Activated naive CD4-positive, alpha-beta T cell treated with anti-CD3 and anti-CD28 coated beads for 36 hours (primary cell): ENCODE measurements at regions of chr1 and their contacts with region 1.

Region 1: DNA sequence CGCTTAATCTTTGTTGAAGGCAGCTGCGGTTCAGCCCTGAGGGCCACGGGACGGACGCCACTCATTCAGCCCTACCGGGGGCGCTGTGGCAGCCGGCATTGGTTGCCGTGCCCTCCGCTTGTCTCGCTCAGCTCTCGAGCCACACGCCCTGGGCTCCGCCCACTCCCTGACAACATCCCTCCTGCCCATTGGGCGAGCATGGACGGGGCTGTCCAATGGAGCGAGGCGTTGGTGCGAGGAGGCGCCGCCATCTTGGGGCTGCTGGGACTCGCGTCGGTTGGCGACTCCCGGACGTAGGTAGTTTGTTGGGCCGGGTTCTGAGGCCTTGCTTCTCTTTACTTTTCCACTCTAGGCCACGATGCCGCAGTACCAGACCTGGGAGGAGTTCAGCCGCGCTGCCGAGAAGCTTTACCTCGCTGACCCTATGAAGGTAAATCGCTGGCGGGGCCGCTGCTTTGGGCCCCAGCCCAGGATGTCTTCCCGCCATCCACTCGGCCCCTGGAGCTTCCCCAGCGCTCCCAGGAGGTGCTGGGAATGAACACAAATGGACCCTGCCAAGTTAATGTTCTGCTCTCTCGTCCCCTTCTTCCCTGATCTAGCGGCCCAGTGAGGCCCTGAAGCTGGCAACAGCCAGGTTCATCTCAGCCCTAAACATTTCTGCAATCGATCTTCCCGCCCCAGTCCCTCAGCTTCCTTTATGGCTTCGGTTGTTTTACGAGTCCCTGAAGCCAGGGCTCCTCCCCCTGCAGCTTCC is at the start of gene SRP9:
- DNase-seq: peak; percentile 99
- H3K4me3 Mint-ChIP-seq: no peak within 1 kb of the TSS
- H3K27ac Mint-ChIP-seq: no peak within 1 kb of the TSS
- H3K4me1 Mint-ChIP-seq: peaks cover 32% of the 10 kb centered on the region
- H3K27me3 Mint-ChIP-seq: no peaks in the 10 kb centered on the region
- total RNA-seq, gene SRP9: 356 to 363 TPM

Region 2: DNA sequence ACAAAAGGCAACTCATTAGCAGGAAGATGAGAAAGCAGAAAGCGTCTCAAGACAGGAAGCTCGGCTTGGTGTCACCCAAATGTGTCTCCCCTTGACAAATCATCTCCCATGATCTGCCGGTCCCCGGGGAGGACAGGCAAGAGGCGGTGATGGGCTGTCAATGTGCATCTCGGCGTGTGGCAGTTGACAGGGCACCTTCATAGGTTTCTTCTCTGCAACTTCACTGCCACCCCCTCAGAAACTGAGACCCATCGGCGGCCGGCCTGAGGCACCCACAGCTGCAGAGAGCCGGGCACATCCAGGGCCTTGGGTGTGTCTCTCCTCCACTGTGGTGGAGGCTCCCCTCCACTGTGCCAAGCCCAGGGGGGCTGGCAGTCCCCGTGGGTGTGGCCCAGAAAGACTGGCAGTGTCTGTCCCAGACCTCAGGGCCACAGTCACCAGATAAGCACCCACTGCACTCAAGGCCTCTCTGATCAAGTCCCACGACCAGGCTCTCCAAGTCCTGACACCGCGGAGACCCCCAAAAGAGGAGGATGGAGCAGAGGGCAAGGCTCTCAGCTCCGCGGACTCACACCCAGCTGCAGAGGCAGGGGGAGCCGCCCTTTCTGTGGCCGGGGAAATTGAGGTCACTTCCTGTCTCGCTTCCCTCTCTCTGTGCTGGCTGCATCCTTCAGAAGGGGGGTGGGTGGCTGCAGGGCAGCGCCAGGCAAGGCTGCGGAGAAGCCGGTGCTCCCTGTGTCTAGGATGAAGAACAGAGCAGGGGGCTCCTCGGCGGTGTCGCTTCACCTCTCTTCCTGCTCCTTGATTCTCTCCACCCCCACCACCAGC is 310.4 kb before region 1 on chr1:
- CTCF ChIA-PET with region 1: interaction called, 3 read pairs
- intact Hi-C with region 1: loop called (anchors 2 kb)
- DNase-seq: peak; percentile 91
- H3K4me3 Mint-ChIP-seq: peak overlapping the region; percentile 90
- H3K27ac Mint-ChIP-seq: peak overlapping the region; percentile 99
- H3K4me1 Mint-ChIP-seq: peaks cover 17% of the 10 kb centered on the region
- H3K27me3 Mint-ChIP-seq: no peaks in the 10 kb centered on the region

Region 3: GRCh38 chr1:225794954-225795353 is 17.2 kb after region 1 on chr1:
- CTCF ChIA-PET with region 1: no interaction called
- intact Hi-C with region 1: no loop called
- DNase-seq: no peak
- H3K4me3 Mint-ChIP-seq: no peak overlapping the region
- H3K27ac Mint-ChIP-seq: no peak overlapping the region
- H3K4me1 Mint-ChIP-seq: no peaks in the 10 kb centered on the region
- H3K27me3 Mint-ChIP-seq: no peaks in the 10 kb centered on the region

Region 4: GRCh38 chr1:225809842-225810578 is 32.2 kb after region 1 on chr1 and contains the start of gene EPHX1:
- CTCF ChIA-PET with region 1: interaction called, 3 read pairs
- intact Hi-C with region 1: loop called (anchors 1 kb)
- DNase-seq: peak; percentile 79
- H3K4me3 Mint-ChIP-seq: peak within 1 kb of the TSS; percentile 71
- H3K27ac Mint-ChIP-seq: peak within 1 kb of the TSS; percentile 59
- H3K4me1 Mint-ChIP-seq: peaks cover 14% of the 10 kb centered on the region
- H3K27me3 Mint-ChIP-seq: no peaks in the 10 kb centered on the region
- total RNA-seq, gene EPHX1: 3.8 to 5.0 TPM

Region 5: DNA sequence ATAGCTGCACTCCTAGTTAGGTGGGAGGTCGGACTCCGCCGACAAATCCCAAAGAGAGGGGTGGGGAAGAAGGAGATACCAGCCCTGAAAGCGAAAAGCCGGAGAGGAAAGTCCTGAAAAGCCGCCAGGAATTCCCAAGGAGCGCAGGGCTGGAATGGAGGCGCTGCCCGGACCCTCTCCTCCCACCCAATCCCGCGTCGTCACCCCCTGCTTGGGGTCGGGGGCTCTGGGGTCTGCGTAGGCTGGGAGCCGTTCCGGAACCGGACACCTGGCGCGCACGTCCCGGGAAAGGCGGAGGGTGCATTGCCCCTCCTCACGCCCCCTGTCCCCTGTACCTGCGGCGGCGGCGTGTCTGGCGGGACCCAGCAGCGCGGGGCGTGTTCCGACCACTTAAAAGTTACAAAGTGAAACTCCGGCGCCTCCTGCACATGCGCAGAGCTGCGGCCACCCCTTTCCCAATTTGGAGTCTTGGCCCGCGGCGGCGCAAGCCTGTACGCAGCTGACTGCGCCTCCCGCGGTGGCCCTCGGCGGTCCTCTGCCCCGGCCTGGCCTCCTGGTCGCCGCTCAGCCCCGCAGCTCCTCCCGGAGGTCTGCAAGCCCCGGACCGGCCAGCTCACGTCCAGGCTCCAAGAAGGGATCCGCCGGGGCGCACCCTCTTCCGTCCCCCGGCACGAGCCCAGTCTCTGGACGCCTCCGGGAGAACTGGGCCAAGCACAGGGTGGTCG is 104.4 kb after region 1 on chr1 and contains the start of gene TMEM63A:
- CTCF ChIA-PET with region 1: interaction called, 9 read pairs
- intact Hi-C with region 1: loop called (anchors 1 kb)
- DNase-seq: peak; percentile 88
- H3K4me3 Mint-ChIP-seq: peak within 1 kb of the TSS; percentile 92
- H3K27ac Mint-ChIP-seq: peak within 1 kb of the TSS; percentile 91
- H3K4me1 Mint-ChIP-seq: peaks cover 49% of the 10 kb centered on the region
- H3K27me3 Mint-ChIP-seq: no peaks in the 10 kb centered on the region
- total RNA-seq, gene TMEM63A: 34.3 to 34.7 TPM

Region 6: DNA sequence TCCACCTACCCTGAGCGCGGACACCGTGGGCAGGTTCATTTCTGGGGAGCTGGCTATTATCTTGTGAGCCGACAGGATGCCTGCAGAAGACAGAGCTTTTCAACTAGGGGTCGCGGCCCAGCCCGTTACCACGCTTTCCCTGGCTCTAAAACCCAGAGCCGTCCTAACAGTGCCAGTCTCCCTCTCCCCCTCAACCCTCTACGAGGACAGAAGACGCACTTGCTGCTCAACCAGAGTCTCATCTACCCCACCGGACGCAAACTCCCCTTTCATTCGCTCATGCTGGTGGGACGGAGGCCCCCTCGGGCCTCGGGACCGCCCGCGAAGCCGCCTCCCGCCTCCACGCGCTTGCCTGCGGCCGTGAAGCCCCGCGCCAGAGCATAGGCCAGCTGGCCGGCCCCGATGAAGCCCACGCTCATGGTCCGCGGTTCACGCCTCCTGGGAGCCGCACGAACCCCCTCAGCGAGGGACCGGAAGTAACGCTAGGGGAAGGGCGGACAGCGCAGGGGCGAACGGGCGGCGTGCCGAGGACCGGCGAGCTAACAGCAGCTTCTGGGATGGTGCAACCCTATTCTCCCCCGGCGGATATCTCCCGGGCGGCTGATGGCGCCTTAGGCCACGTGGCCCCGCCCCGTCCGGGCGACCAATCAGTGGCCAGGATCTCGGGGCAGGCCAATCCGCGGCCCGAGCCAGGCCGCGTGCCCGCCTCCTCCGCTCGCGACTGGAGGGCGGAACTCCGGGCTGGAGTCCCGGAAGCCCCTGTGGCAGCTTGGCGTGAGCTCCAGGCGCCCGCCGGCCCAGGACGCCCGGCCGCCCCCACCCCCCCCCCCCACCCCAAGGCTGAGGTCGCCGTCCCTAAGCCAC is 146.2 kb after region 1 on chr1 and contains the start of gene PYCR2:
- CTCF ChIA-PET with region 1: interaction called, 6 read pairs
- intact Hi-C with region 1: loop called (anchors 1 kb)
- DNase-seq: peak; percentile 96
- H3K4me3 Mint-ChIP-seq: peak within 1 kb of the TSS; percentile 95
- H3K27ac Mint-ChIP-seq: peak within 1 kb of the TSS; percentile 90
- H3K4me1 Mint-ChIP-seq: peaks cover 59% of the 10 kb centered on the region
- H3K27me3 Mint-ChIP-seq: no peaks in the 10 kb centered on the region
- total RNA-seq, gene PYCR2: 143 to 149 TPM